ENCODE measurements at regions of chr10 and their contacts with region 1.

Region 1: DNA sequence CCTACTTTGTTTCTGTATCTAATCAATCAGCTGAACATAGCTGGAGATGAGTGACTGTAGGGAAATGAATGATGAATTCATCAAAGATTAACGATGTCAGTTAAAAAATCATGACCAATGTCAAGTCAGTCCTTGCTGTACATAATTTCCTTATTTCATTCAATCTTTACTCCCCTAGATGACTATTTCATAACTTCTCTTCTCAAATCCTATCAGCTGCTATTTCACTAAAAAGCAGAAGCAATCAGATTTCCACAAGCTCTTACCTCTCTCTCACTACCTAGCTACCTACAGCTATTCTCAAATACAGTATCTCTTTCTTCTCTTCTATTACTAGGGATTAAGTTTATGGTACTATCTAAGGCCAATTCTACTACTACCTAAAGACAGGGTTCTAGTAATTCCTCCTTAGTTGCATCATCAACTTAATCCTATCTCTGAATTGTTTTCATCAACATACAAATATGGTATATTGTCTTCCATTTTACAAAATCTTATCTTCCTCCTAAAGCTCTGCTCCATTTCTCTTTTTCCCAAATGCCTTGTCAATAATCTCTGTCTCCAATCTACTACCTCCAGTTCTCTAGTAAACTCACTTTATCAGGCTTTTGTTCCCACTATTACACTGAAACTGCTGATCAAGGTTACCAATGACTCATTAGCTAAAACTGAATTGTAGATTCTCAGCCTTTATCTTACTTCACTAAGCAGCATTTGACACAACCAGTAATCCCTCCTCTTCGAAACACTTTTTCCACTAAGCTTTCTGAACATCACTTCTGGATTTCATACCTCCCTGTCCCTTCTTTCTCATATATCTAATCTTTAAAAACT is 28.4 kb downstream of the JMJD1C start:
- DNase-seq: no peak
- H3K4me3 Mint-ChIP-seq: no peak overlapping the region
- H3K27ac Mint-ChIP-seq: no peak overlapping the region
- H3K4me1 Mint-ChIP-seq: peaks cover 22% of the 10 kb centered on the region
- H3K27me3 Mint-ChIP-seq: no peaks in the 10 kb centered on the region

Region 2: GRCh38 chr10:63416376-63416775 is 21.0 kb before region 1 on chr10:
- CTCF ChIA-PET with region 1: no interaction called
- intact Hi-C with region 1: loop called (anchors 1 kb)
- DNase-seq: no peak
- H3K4me3 Mint-ChIP-seq: no peak overlapping the region
- H3K27ac Mint-ChIP-seq: no peak overlapping the region
- H3K4me1 Mint-ChIP-seq: peaks cover 28% of the 10 kb centered on the region
- H3K27me3 Mint-ChIP-seq: no peaks in the 10 kb centered on the region

Region 3: DNA sequence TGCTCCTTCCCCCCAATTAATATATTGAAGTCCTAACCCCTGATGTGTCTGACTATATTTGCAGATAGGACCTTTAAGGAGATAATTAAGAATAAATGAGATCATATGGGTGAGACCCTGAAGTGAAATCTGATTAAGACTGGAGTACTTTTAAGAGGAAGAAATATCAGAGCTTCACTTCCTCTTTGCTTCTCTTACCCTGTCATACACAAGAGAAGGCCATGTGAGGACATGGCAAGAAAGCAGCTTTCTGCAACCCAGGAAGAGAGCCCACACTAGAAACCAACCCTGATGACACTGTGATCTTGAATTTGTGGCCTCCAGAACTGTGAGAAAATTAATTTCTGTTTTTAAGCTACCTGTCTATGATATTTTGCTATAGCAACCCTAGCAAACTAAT is 15.7 kb before region 1 on chr10:
- CTCF ChIA-PET with region 1: interaction called, 3 read pairs
- intact Hi-C with region 1: loop called (anchors 1 kb)
- DNase-seq: no peak
- H3K4me3 Mint-ChIP-seq: no peak overlapping the region
- H3K27ac Mint-ChIP-seq: peak overlapping the region; percentile 73
- H3K4me1 Mint-ChIP-seq: peaks cover 39% of the 10 kb centered on the region
- H3K27me3 Mint-ChIP-seq: no peaks in the 10 kb centered on the region

Region 4: DNA sequence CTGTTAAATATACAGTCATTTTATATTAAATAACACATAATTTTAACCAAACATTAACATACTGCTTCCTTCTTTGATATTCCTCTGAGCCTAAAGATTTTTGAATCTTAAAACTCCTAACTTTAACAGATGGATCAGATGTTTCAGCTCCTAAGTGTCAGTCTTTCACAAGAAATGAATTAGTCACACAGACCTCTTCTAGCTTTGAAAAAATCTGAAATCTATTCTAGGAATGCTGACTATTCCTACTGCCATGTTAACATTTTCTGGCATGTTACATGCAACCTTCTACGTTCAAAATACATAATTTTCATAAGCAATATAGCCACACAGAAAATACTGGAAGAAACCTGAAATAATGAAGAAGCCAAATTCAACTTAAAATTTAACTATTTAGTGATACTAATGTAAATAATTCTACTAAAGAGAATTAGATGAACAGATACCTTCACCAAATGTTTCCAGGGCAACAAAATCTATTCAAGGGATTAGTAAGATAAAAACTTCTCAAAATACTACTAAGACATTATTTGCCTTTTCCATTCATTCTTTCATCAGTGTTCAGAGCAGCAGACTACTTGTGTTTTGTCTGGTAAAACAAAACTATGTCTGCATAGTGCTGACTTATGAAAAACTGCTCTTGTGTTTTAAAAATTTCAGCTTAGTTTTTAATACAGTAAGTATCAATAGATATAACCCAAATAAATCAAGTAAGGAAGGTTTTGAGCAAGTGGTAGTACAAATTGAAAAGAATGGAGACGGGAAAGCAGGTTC is 19.3 kb after region 1 on chr10:
- CTCF ChIA-PET with region 1: no interaction called
- intact Hi-C with region 1: no loop called
- DNase-seq: no peak
- H3K4me3 Mint-ChIP-seq: no peak overlapping the region
- H3K27ac Mint-ChIP-seq: no peak overlapping the region
- H3K4me1 Mint-ChIP-seq: peaks cover 15% of the 10 kb centered on the region
- H3K27me3 Mint-ChIP-seq: no peaks in the 10 kb centered on the region